Panc1 (cell line): ENCODE measurements at regions of chr11 and their contacts with region 1.

Region 1: DNA sequence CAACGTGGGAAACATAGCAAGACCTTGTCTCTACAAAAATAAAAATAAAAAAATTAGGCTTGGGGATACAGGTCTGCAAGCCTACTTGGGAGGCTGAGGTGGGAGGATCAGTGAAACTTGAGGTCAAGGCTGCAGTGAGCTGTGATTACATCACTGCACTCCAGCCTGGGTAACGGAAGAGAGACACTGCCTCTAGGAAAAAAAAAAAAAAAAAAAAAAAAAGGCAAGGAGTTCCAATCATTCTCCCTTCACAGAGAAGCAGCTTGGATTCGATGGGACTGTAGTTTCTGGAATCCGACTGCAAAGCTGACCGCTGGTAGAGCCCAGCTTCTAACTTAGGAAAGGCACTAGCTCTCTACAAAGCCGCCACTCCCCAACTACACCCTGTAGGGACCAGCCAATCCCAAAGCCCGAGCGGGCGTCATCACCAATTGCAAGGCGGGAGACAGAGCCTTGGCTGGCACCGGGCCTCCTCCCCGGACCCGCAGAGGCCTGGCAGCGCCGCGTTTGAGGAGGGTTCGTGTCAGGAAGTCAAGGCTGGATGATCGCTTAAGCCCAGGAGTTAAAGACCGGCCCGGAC is 699 bp upstream of the DDB2 start:
- DNase-seq: peak; percentile 73
- ATAC-seq: peak; percentile 94
- H3K4me3 ChIP-seq: peak overlapping the region; percentile 83 to 97
- H3K27ac ChIP-seq: peak overlapping the region; percentile 88
- H3K4me1 ChIP-seq: peaks cover 16% of the 10 kb centered on the region
- H3K27me3 ChIP-seq: no peaks in the 10 kb centered on the region
- CTCF ChIP-seq: no peak

Region 2: GRCh38 chr11:47186937-47187695 is 27.0 kb before region 1 on chr11:
- CTCF ChIA-PET with region 1: interaction called, 13 read pairs
- POLR2A ChIA-PET with region 1: interaction called, 9 read pairs
- in situ Hi-C with region 1: no loop called
- intact Hi-C with region 1: loop called (anchors 1 kb)
- DNase-seq: peak; percentile 64
- ATAC-seq: peak; percentile 79
- H3K4me3 ChIP-seq: peak overlapping the region; percentile 56 to 64
- H3K27ac ChIP-seq: peak overlapping the region; percentile 62
- H3K4me1 ChIP-seq: peaks cover 30% of the 10 kb centered on the region
- H3K27me3 ChIP-seq: no peaks in the 10 kb centered on the region
- CTCF ChIP-seq: no peak; the same call in 1 of the 2 replicates

Region 3: GRCh38 chr11:47225552-47226400 is 11.7 kb after region 1 on chr11:
- CTCF ChIA-PET with region 1: no interaction called
- POLR2A ChIA-PET with region 1: interaction called, 11 read pairs
- in situ Hi-C with region 1: no loop called
- intact Hi-C with region 1: no loop called
- DNase-seq: no peak
- ATAC-seq: no peak
- H3K4me3 ChIP-seq: no peak overlapping the region
- H3K27ac ChIP-seq: no peak overlapping the region
- H3K4me1 ChIP-seq: no peaks in the 10 kb centered on the region
- H3K27me3 ChIP-seq: no peaks in the 10 kb centered on the region
- CTCF ChIP-seq: no peak

Region 4: GRCh38 chr11:47899801-47900200 is 685.7 kb after region 1 on chr11:
- CTCF ChIA-PET with region 1: no interaction called
- POLR2A ChIA-PET with region 1: no interaction called
- in situ Hi-C with region 1: no loop called
- intact Hi-C with region 1: no loop called
- DNase-seq: no peak
- ATAC-seq: peak; percentile 34; the same call in 1 of the 2 replicates
- H3K4me3 ChIP-seq: no peak overlapping the region
- H3K27ac ChIP-seq: no peak overlapping the region
- H3K4me1 ChIP-seq: no peaks in the 10 kb centered on the region
- H3K27me3 ChIP-seq: no peaks in the 10 kb centered on the region
- CTCF ChIP-seq: no peak